ENCODE measurements at regions of chr2 and their contacts with region 1.

Region 1: GRCh38 chr2:61922714-61923113 is 17.2 kb downstream of the COMMD1 start:
- DNase-seq: no peak
- H3K4me3 ChIP-seq: no peak overlapping the region
- H3K27ac ChIP-seq: no peak overlapping the region
- H3K4me1 ChIP-seq: no peaks in the 10 kb centered on the region
- H3K27me3 ChIP-seq: no peaks in the 10 kb centered on the region
- CTCF ChIP-seq: no peak

Region 2: GRCh38 chr2:61970807-61971556 is 48.3 kb after region 1 on chr2:
- CTCF ChIA-PET with region 1: no interaction called
- dilution Hi-C with region 1: no loop called
- in situ Hi-C with region 1: no loop called
- intact Hi-C with region 1: loop called (anchors 1 kb)
- DNase-seq: peak; percentile 76
- H3K4me3 ChIP-seq: peak overlapping the region; percentile 42 to 60 (median 43)
- H3K27ac ChIP-seq: peak overlapping the region; percentile 35
- H3K4me1 ChIP-seq: peaks cover 10% of the 10 kb centered on the region
- H3K27me3 ChIP-seq: no peaks in the 10 kb centered on the region
- CTCF ChIP-seq: peak; percentile 28 to 56

Measured in mammary epithelial cell (primary cell).